Sigmoid colon (tissue), 7 donors: ENCODE measurements at regions of chr21 and their contacts with region 1.

Region 1: DNA sequence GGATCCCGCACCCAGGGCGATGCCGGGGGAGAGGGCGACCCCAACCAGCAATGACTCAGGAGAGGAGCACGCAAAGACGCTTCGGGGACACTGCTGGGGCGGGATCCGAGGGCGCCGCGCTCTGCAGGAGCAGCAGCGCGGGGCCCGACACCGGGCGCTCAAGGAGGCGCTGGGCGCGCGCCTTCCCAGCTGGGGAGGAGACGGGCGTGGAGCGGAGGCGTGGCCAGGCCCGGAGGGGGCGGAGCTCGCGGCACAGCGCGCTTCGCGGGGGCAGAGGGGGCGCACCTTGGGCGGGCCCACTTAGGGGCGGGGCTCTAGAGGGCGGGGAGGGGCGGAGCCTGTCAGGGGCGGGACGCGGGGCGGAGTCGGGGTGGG is 369 bp downstream of the SUMO3 start:
- DNase-seq: peak; percentile 97
- H3K4me3 ChIP-seq: peak overlapping the region; percentile 54 to 92 (median 84)
- H3K27ac ChIP-seq: peak overlapping the region; percentile 83 to 93 (median 90)
- H3K4me1 ChIP-seq: peaks cover 0 to 29% (median 20%) of the 10 kb centered on the region in 4 donors
- H3K27me3 ChIP-seq: no peaks in the 10 kb centered on the region
- CTCF ChIP-seq: no peak
- EP300 ChIP-seq: no peak
- POLR2A ChIP-seq: peak in 1 of 2 donors; percentile 13

Region 2: GRCh38 chr21:44338971-44339910 is 478.3 kb before region 1 on chr21 and contains the start of gene CFAP410:
- intact Hi-C with region 1: loop called (anchors 5 kb)
- DNase-seq: peak; percentile 97
- H3K4me3 ChIP-seq: peak within 1 kb of the TSS; percentile 69 to 84 (median 76)
- H3K27ac ChIP-seq: peak within 1 kb of the TSS; percentile 93 to 99 (median 96)
- H3K4me1 ChIP-seq: peaks cover 0 to 22% (median 18%) of the 10 kb centered on the region in 4 donors
- H3K27me3 ChIP-seq: no peaks in the 10 kb centered on the region
- CTCF ChIP-seq: no peak
- EP300 ChIP-seq: peak in 1 of 4 donors; percentile 76
- POLR2A ChIP-seq: peak; percentile 94
- total RNA-seq, gene CFAP410: 25.8 to 31.1 (median 27.6) TPM

Region 3: DNA sequence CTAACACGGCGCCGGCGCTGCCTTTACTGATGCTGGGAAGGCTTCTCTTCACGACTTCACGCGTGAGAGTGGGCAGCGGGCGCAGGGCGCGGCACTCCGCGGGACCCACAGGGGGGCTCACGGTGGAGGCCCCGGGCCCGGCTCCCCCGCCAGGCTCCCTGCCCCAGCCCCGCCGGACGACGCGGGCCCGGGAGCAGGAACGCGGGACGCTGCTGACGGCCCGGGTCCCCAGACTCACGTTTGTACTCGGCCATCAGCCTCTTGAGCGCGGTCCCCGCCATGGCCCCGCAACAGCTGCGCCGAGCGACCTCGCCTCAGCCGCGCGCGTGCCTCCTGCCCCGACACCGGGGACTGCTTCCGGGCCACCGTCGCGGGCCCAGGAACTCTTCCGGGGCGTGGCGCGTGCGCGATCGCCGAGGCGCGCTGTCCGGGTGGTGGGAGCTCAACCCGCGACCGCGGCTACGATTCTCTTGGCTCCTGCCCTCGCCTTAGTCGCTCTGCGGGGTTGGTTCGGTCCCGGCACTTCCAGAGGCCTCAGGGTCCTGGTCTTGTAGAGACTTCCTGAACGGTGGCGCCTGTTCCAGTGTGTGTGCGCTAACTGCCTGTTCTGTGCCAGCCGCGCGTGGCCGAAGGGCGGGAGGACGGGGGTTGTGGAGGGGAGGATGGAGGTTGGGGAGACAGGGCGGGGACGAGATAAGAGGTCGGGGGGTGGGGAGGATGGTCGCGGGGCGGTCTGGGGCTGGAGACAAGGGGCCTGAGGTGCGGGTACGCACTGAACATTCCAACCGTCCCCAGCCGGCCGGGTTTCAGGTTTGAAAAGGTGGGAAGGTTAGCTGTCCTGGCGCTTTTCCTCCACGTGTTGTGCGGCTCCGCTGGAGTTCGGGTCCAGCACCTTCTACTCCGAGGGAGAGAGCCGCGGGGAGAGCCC is 15.8 kb before region 1 on chr21 and contains the start of gene UBE2G2:
- intact Hi-C with region 1: loop called (anchors 1 kb)
- DNase-seq: peak; percentile 87
- H3K4me3 ChIP-seq: peak within 1 kb of the TSS; percentile 55 to 83 (median 78)
- H3K27ac ChIP-seq: peak within 1 kb of the TSS; percentile 73 to 85 (median 78)
- H3K4me1 ChIP-seq: peaks cover 0 to 34% (median 25%) of the 10 kb centered on the region in 4 donors
- H3K27me3 ChIP-seq: no peaks in the 10 kb centered on the region
- CTCF ChIP-seq: no peak
- EP300 ChIP-seq: no peak
- POLR2A ChIP-seq: peak; percentile 33 to 65
- total RNA-seq, gene UBE2G2: 51.5 to 101 (median 63.1) TPM

Region 4: GRCh38 chr21:44869781-44870747 is 52.6 kb after region 1 on chr21:
- intact Hi-C with region 1: loop called (anchors 1 kb)
- DNase-seq: peak; percentile 88
- H3K4me3 ChIP-seq: peak overlapping the region in 3 of 4 donors; percentile 1 to 91 (median 26)
- H3K27ac ChIP-seq: peak overlapping the region; percentile 95 to 98 (median 98)
- H3K4me1 ChIP-seq: peaks cover 0 to 84% (median 79%) of the 10 kb centered on the region in 4 donors
- H3K27me3 ChIP-seq: no peaks in the 10 kb centered on the region
- CTCF ChIP-seq: no peak
- EP300 ChIP-seq: peak in 1 of 4 donors; percentile 8
- POLR2A ChIP-seq: no peak

Region 5: DNA sequence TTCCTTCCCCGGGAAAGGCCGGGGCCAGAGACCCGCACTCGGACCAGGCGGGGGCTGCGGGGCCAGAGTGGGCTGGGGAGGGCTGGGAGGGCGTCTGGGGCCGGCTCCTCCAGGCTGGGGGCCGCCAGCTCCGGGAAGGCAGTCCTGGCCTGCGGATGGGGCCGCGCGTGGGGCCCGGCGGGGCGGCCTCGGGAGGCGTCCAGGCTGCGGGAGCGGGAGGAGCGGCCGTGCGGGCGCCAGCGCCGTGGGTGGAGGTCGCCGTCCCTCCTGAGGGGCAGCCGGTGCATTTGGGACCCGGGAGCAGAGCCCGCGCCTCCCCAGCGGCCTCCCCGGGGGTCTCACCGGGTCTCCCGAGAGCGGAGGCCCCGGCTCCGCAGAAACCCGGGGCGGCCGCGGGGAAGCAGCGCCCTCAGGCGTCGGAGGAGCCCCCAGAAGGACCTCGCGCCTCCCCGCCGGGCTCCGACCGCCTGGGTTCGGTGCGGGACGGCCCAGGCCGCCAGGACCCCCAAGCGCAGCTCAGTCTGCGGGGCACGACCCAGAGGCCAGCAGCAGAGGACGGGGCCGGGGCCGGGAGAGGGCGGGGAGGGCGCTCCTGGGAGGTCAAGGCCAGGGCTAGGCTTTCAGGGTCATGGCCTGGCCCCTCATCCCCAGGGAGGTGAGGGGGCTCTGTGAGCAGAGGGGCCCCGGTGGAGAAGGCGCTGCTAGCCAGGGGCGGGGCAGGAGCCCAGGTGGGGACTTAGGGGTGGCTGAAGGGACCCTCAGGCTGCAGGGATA is 115.1 kb after region 1 on chr21:
- intact Hi-C with region 1: loop called (anchors 5 kb)
- DNase-seq: no peak
- H3K4me3 ChIP-seq: peak overlapping the region; percentile 11 to 65 (median 48)
- H3K27ac ChIP-seq: peak overlapping the region in 2 of 4 donors; percentile 7 to 41
- H3K4me1 ChIP-seq: peaks cover 0 to 29% (median 24%) of the 10 kb centered on the region in 4 donors
- H3K27me3 ChIP-seq: peaks cover 10 to 67% (median 42%) of the 10 kb centered on the region in 3 donors
- CTCF ChIP-seq: peak in 3 of 4 experiments; percentile 32 to 75 (median 39)
- EP300 ChIP-seq: no peak
- POLR2A ChIP-seq: no peak

Region 6: DNA sequence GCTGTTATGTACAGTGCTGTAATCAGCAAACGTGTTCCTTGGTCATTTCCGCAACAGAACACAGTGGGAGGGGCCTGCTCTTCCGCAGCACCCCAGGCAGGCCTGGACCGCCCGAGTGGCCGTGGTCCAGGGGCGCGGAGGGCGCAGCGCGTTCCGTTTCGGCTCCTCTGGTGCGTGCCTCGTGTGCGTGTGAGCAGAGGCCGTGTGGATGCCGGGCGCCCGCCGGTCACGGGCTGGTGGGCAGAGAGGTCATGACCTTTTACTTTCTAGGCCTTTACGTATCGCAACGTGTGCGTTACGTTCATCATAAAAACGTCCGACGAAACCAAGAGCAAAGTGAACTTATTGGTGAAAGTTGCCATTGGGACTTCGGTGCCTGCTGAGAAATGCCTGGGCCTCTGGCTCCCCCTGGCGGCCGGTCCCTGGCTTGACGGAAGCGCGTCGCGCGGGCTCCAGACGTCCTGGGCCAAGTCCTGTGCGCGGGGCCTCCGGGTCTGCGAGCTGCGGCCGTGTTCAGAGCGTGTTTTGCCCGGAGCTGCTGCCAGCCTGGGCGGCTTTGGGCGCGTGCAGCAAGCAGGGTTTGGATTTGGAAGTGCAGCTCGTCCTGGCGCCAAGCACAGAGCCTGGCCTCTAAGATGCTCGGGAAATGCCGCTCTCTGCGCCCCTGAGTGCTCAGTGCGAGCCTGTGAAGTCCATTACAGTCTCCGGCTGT is 621.8 kb after region 1 on chr21:
- intact Hi-C with region 1: no loop called
- DNase-seq: peak; percentile 93
- H3K4me3 ChIP-seq: peak overlapping the region; percentile 11 to 45 (median 36)
- H3K27ac ChIP-seq: peak overlapping the region; percentile 66 to 80 (median 77)
- H3K4me1 ChIP-seq: peaks cover 0 to 24% (median 14%) of the 10 kb centered on the region in 4 donors
- H3K27me3 ChIP-seq: no peaks in the 10 kb centered on the region
- CTCF ChIP-seq: peak; percentile 96 to 98 (median 98)
- EP300 ChIP-seq: peak in 1 of 4 donors; percentile 52
- POLR2A ChIP-seq: no peak